Tibial artery (tissue), 4 donors: ENCODE measurements at regions of chr15 and their contacts with region 1.

Region 1: DNA sequence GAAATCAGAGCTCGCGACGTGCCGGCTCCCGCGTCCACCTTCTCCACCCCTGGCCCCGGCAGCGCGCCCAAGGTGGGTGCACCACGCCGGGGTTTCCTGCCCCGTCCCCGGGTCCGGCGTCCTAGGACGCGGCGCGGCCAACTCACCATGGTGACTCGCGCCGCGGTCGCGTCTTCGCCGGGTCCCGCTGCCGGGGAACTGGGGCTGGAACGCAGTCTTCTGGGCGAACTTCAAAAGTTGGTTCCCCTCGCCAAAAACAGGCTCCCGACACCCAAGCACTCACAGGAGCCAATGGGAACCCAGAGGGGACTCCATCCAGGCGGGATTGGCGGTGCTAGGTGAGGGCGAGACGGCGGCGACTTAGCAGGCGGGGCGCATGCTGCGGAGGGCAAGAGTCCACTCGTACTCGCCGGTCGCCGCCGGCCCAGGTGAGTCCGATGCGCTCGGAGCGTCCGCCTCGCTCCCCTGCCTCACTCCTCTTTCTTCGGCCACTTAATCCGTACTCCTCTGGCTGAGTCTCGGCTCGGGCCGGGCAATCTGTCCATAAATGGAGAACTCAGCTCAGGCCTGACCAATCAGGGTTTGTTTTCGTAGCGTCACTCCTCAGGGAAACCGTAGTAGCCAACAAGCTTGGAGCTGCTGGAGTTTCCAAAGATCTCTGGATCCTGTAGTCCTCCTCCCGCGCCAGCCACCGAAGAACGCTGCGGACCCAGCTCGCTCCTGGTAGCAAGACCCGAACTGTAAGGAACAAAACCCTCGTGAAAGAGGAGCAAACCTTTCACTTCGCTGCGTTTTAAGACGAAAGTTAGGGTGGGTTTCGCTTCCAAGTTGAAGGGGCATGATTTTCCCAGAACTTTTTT is at the start of gene MYO1E:
- DNase-seq: peak; percentile 94
- H3K4me3 ChIP-seq: peak within 1 kb of the TSS; percentile 83 to 89
- H3K27ac ChIP-seq: peak within 1 kb of the TSS; percentile 93 to 96
- H3K4me1 ChIP-seq: peaks cover 0 to 44% (median 14%) of the 10 kb centered on the region in 4 donors
- H3K27me3 ChIP-seq: no peaks in the 10 kb centered on the region
- CTCF ChIP-seq: peak in 1 of 2 experiments; percentile 7

Region 2: GRCh38 chr15:59160880-59161593 is 211.5 kb before region 1 on chr15:
- intact Hi-C with region 1: loop called (anchors 10 kb)
- DNase-seq: no peak
- H3K4me3 ChIP-seq: no peak overlapping the region
- H3K27ac ChIP-seq: no peak overlapping the region
- H3K4me1 ChIP-seq: peaks cover 0 to 16% (median 6%) of the 10 kb centered on the region in 4 donors
- H3K27me3 ChIP-seq: no peaks in the 10 kb centered on the region
- CTCF ChIP-seq: no peak

Region 3: DNA sequence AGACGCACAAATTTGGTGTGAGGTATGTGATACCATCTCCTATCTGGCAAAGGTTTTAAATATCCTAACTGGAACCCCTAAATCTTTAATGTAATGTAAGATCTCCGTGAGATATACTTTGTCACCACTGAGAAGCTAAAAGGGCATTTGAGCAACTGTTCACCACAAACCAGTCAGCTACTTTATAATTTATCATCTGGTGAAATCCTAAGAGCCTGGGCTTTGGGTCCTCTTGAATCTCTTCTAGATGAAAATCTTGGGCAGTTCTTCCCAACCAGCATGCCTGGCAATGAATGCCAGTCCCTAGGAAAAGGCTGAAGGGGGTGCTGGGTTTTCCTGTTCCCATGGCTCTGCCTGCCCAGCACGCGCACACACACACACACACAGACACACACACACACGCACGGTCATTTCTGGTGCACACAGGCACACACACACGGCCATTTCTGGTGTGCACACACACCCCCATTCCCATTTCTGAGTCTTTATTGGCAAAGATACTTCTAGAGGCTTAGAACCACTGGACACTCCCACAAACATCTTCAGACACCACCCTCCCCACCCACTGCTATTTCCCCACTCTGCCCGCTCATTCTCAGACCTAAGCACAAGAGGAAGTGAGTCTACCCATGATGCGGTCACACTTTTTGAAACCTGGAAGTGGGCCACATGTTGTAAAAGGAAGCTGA is 72.5 kb before region 1 on chr15:
- intact Hi-C with region 1: loop called (anchors 10 kb)
- DNase-seq: peak; percentile 91 to 92
- H3K4me3 ChIP-seq: peak overlapping the region in 1 of 2 donors; percentile 26
- H3K27ac ChIP-seq: peak overlapping the region; percentile 62 to 67
- H3K4me1 ChIP-seq: peaks cover 0 to 79% (median 33%) of the 10 kb centered on the region in 4 donors
- H3K27me3 ChIP-seq: no peaks in the 10 kb centered on the region
- CTCF ChIP-seq: no peak

Region 4: DNA sequence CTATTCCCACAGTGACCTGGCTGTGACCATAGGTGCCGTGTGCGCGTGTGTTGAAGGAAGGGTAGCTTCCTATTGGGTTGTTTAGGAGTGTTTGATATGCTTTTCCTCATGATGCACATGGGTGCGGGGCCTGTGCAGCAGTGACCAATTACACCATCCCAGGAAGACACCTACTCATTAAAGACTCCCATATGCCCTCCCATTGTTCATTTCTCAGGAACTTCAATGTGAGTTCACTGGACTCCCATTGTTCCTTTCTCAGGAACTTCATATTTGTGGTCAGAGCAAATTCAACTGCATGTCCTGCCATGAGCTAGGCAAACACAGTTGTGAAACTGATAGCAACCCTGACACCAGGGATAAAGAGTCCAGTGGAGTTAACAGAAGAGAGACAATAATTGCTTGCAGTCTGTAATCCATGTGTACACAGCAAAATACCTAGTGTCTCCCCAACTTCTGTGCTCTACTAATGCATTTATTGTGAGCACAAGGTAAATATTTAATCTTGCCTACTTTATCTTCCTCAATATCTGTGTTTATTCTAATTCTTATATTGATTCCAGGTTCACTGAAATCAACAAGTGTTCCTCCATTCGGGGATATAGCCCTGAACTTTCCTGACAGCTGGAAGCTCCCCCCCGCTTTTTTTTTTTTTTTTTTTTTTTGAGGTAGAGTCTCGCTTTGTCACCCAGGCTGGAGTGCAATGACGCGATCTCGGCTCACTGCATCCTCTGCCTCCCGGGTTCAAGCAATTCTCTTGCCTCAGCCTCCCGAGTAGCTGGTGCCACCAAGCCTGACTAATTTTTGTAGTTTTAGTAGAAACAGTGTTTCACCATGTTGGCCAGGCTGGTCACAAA is 181.5 kb after region 1 on chr15:
- intact Hi-C with region 1: no loop called
- DNase-seq: no peak
- H3K4me3 ChIP-seq: no peak overlapping the region
- H3K27ac ChIP-seq: no peak overlapping the region
- H3K4me1 ChIP-seq: no peaks in the 10 kb centered on the region
- H3K27me3 ChIP-seq: peaks cover 0 to under 1% of the 10 kb centered on the region in 2 donors
- CTCF ChIP-seq: no peak